ENCODE measurements at regions of chr1 and their contacts with region 1.

Region 1: DNA sequence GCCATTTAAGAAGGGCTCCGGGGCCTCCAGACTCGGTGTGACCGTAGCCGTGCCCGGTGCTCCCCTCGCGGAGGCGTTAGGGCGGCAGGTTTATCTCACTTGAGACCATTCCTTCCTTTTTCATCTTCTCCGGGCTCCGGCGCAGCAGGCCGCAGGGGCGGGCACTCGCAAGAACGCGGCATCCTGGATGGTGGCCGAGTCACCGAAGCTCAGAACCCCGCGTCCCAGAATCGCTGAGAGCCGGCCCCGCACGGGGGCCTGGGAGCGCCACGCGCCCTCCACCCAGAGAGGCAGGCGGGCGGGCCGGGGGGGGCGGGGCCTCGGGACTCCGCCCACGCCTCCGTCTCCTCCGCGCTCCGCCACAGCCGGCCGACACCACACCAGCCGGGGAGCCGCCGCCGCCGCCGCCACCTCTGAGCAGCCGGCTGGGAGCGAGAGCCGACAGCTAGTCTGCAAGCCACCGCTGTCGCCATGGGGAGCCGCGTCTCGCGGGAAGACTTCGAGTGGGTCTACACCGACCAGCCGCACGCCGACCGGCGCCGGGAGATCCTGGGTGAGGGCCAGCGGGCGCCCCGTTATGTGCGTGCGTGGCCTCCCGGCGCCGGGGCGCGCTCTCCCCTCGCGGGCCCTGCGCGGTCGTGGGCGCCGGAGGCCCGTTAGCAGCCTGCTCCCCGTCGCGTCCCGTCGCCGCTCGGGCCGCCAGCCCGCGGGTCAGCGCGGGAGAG is at the start of gene DEGS1:
- DNase-seq: peak; percentile 73 to 97 (median 82)

Region 2: GRCh38 chr1:224223819-224224714 is 41.0 kb after region 1 on chr1:
- intact Hi-C with region 1: no loop called
- DNase-seq: no peak

Region 3: GRCh38 chr1:224287714-224288113 is 104.7 kb after region 1 on chr1:
- intact Hi-C with region 1: loop called (anchors 10 kb)
- DNase-seq: peak in 1 of 10 donors; percentile 37

Measured in posterior cingulate gyrus (tissue), 11 donors.